HCT116 (cell line): ENCODE measurements at regions of chr4 and their contacts with region 1.

Region 1: DNA sequence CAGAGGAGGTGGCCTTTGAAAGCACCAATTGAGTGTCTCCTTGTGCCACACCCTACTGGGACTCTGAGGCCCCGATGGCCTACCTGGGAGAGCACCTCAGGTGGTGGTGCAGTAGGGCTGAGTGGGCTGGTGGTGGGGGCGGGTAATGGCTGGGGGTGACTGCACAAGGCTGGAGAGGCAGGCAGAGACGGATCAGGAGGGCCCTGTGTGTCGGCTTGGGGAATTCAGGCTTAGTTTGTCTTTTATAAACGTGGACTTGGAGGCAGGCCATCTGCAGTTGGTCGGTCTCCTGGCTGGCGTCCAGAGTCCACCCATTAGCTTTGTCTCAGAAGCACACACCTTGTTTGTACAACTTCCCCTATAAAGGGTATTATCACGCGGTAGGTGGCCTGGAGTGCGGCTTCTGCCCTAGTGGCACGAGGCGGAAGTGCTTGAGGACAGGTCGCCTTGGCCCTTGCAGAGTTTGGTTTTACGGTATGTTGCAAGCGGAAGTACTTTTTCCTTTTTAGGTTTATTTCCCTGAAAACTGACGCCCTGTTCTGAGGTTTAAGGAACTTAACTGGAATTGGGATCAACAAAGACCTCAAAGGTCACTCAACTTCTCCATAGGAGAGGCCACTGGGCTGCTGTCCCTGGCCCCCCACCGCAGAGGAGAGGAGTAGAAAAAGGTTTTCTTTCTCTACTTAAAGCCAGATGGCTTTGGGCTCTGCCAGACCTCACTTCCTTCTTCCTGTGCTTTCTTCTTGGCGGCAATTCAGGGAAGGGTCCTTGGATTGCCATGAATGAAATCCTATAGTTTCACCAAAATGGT is 8.0 kb downstream of the TBC1D14 start:
- DNase-seq: peak; percentile 79
- ATAC-seq: peak; percentile 88
- H3K4me3 ChIP-seq: peak overlapping the region; percentile 20 to 25
- H3K27ac ChIP-seq: peak overlapping the region; percentile 66
- H3K4me1 ChIP-seq: peaks cover 36 to 39% of the 10 kb centered on the region in 2 experiments
- H3K27me3 ChIP-seq: no peaks in the 10 kb centered on the region
- CTCF ChIP-seq: peak in 2 of 3 experiments; percentile 72 to 79; a peak in 4 of 6 replicates
- POLR2A ChIP-seq: no peak
- RAD21 ChIP-seq: no peak

Region 2: GRCh38 chr4:6953751-6954380 is 36.2 kb after region 1 on chr4:
- CTCF ChIA-PET with region 1: no interaction called
- POLR2A ChIA-PET with region 1: no interaction called
- RAD21 ChIA-PET with region 1: no interaction called
- intact Hi-C with region 1: loop called (anchors 5 kb)
- DNase-seq: peak; percentile 54
- ATAC-seq: peak; percentile 89
- H3K4me3 ChIP-seq: peak overlapping the region; percentile 34 to 62
- H3K27ac ChIP-seq: peak overlapping the region; percentile 68
- H3K4me1 ChIP-seq: peaks cover 21 to 38% of the 10 kb centered on the region in 2 experiments; a peak in 3 of 4 replicates
- H3K27me3 ChIP-seq: no peaks in the 10 kb centered on the region
- CTCF ChIP-seq: no peak
- POLR2A ChIP-seq: no peak
- RAD21 ChIP-seq: no peak

Region 3: DNA sequence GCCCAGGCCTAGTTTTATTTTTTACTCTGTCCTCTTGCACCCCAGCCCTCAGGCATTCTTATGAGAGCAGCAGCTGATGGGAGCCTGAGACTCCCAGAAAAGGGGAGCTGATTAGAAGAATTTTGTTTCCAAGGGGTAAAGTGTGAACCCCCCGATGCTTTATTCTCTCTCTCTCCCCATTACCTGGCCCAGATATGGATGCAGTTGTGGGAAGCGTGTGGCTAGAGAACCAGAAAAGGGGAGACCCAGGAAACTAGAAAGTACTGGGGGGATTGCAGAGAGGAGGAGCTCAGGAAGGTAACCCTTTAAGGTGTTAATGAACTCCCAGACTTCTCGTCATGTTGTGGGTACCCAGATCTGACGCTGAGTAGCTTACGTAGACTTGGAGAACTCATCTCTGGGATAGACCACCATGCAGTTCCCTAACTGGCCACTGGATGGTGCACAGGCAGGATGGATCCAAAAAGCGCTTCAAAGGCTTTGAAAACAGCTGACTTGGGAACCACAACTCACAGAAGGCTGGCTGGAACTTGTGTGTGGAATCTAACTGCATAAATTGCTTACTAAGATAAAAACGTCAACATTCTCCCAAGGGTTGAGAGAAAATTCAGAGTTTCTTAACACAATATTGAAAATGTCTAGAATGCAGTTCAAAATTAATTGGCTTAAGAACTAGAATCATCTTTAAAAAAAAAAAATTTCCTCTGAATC is 56.6 kb after region 1 on chr4:
- CTCF ChIA-PET with region 1: interaction called, 8 read pairs
- POLR2A ChIA-PET with region 1: no interaction called
- RAD21 ChIA-PET with region 1: no interaction called
- intact Hi-C with region 1: loop called (anchors 2 kb)
- DNase-seq: peak; percentile 70
- ATAC-seq: peak; percentile 90
- H3K4me3 ChIP-seq: no peak overlapping the region
- H3K27ac ChIP-seq: no peak overlapping the region
- H3K4me1 ChIP-seq: peaks cover 3% of the 10 kb centered on the region in 2 experiments; a peak in 1 of 4 replicates
- H3K27me3 ChIP-seq: no peaks in the 10 kb centered on the region
- CTCF ChIP-seq: peak; percentile 75 to 98 (median 87)
- POLR2A ChIP-seq: no peak
- RAD21 ChIP-seq: peak; percentile 79